IMR-90 (cell line): ENCODE measurements at regions of chr3 and their contacts with region 1.

Region 1: DNA sequence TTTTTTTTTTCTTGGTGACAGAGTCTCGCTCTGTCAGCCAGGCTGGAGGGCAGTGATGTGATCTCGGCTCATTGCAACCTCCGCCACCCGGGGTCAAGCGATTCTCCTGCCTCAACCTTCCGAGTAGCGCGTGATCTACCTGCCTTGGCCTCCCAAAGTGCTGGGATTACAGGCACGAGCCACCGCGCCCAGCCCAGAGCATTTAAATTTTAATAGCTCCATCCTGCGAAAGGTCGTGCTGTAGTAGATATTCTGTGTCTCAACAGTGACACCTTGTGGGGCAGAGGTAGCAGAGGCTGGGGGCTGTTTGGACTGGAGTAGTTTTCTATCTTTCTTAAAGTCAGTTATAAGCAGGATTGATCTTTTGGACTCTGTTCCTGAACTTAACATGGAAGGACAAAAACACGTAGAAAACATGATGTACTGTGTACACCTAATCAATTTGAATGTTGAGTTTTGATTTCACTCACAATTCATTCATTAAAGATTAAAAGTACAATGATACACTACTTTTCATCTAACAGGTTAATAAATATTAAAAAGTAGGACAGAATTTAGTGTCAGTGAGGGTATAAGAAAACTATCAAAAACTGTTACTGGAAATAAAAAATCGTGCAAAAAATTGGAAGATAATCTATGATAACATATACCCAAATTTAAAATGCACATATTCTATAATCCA is 11.0 kb upstream of the PDCD6IP start:
- DNase-seq: peak; percentile 72
- ATAC-seq: peak; percentile 97
- H3K4me3 ChIP-seq: peak overlapping the region; percentile 28
- H3K27ac ChIP-seq: no peak overlapping the region
- H3K4me1 ChIP-seq: peaks cover 2% of the 10 kb centered on the region
- H3K27me3 ChIP-seq: no peaks in the 10 kb centered on the region
- CTCF ChIP-seq: peak; percentile 84
- POLR2A ChIP-seq: no peak
- RAD21 ChIP-seq: peak; percentile 78

Region 2: DNA sequence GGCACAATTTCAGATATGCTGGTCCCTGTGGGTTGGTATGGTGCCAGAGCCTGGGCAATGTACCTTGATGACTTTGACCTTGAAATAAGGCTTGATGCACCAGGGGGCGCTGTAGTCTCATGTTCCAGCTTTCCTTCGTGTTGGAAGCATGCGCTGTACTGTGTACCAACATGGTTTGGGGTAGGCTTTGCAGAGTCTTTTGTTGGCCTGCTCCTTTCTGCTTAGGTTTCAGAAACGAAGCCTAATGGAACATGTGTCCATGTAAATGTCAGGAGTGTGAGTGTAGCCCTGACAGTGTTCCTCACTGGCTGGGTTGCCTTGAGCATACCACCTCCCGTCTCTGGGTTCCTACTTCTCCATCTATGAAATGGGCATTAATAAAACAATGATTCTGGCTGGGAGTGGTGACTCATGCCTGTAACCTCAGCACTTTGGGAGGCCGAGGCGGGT is 839.7 kb before region 1 on chr3:
- CTCF ChIA-PET with region 1: interaction called, 4 read pairs
- POLR2A ChIA-PET with region 1: no interaction called
- dilution Hi-C with region 1: no loop called
- in situ Hi-C with region 1: loop called (anchors 25 kb)
- intact Hi-C with region 1: loop called (anchors 2 kb)
- DNase-seq: peak; percentile 75
- ATAC-seq: peak; percentile 94
- H3K4me3 ChIP-seq: no peak overlapping the region
- H3K27ac ChIP-seq: no peak overlapping the region
- H3K4me1 ChIP-seq: no peaks in the 10 kb centered on the region
- H3K27me3 ChIP-seq: peaks cover 6% of the 10 kb centered on the region
- CTCF ChIP-seq: peak; percentile 78
- POLR2A ChIP-seq: no peak
- RAD21 ChIP-seq: peak; percentile 87

Region 3: DNA sequence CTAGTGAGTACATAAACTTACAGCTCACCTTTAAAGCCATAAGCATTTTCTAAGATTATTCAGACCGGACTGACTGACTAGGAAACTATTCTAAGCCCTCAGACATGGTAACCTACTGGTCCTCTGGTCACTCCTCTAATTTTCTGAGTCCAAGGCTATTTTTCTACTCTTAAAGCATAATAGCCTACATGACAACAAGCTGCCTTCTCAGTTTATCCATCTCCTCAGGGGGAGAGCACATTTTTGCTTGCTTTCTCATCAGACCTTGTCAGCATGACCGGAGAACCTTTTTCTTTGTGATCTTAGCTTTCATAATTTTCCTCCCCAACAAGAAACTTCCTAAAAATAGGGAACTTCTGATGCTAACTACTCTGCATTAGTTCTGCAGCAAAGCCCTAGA is 385.7 kb before region 1 on chr3:
- CTCF ChIA-PET with region 1: no interaction called
- POLR2A ChIA-PET with region 1: no interaction called
- dilution Hi-C with region 1: no loop called
- in situ Hi-C with region 1: no loop called
- intact Hi-C with region 1: loop called (anchors 10 kb)
- DNase-seq: peak; percentile 70
- ATAC-seq: peak; percentile 78
- H3K4me3 ChIP-seq: no peak overlapping the region
- H3K27ac ChIP-seq: no peak overlapping the region
- H3K4me1 ChIP-seq: peaks cover 6% of the 10 kb centered on the region
- H3K27me3 ChIP-seq: no peaks in the 10 kb centered on the region
- CTCF ChIP-seq: no peak
- POLR2A ChIP-seq: no peak
- RAD21 ChIP-seq: no peak

Region 4: DNA sequence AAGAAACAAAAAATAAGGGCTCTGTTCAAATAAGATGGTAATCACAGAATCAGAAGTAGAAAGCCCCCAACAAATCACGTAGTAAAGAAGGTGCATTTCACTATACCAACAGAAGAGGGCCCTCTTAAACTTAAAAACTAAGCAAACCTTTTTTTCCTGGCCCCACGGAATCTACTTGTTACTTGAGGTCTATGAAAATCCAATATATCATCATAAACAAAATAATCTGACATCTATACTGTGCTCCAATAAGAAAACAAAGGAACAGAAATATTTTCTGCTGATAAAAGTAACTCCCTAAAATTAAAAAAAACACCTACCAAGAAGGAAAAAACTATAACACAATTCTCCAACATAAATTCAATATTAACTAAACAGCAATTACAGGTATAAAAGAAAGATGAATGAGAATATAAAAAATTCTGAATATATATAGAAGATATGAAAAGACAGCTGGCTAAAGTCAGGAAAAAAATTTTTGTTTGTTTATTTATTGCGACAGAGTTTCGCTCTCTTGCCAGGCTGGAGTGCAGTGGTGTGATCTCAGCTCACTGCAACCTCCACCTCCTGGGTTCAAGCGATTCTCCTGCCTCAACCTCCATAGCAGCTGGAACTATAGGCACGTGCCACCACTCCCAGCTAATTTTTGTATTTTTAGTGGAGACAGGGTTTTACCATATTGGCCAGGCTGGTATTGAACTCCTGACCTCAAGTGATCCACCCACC is 151.2 kb before region 1 on chr3:
- CTCF ChIA-PET with region 1: interaction called, 10 read pairs
- POLR2A ChIA-PET with region 1: no interaction called
- dilution Hi-C with region 1: no loop called
- in situ Hi-C with region 1: loop called (anchors 5 kb)
- intact Hi-C with region 1: loop called (anchors 1 kb)
- DNase-seq: peak; percentile 78
- ATAC-seq: peak; percentile 75
- H3K4me3 ChIP-seq: no peak overlapping the region
- H3K27ac ChIP-seq: no peak overlapping the region
- H3K4me1 ChIP-seq: no peaks in the 10 kb centered on the region
- H3K27me3 ChIP-seq: no peaks in the 10 kb centered on the region
- CTCF ChIP-seq: peak; percentile 71
- POLR2A ChIP-seq: no peak
- RAD21 ChIP-seq: peak; percentile 73

Region 5: DNA sequence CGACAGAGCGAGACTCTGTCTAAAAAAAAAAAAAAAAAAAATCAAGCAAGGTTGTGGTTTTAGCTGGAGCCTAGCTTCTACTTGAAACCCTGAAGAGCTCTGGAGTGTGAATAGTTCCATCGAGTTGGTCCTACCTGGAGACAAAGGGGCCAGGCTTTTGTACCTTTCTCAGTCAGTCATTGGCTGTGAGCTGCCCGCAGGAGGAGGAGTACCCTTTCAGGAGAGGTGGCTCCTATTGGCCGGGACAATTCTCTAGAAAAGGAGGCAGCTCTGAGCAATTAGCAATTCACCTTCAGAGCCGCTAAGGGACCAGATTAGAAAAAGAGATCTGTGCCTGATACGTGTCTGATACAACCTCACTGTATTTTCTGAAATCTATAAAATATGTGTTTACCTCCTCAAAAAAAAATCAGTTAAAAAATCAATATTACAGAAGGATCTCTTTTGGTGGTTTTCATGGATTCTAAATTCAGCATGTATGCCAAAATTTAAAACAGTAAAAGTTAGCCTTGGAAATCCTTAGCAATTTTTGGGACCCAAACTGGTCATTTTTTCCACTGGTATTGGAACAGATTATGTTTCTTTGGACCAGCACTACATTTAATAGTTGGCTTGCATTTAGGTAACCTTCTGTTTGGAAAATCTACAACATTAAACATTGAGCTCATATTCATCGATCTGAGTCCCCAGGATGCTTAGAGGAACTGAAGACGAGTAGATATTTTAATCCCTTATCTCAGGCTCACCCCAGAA is 18.7 kb before region 1 on chr3:
- CTCF ChIA-PET with region 1: no interaction called
- POLR2A ChIA-PET with region 1: no interaction called
- dilution Hi-C with region 1: no loop called
- in situ Hi-C with region 1: no loop called
- intact Hi-C with region 1: no loop called
- DNase-seq: no peak
- ATAC-seq: no peak
- H3K4me3 ChIP-seq: no peak overlapping the region
- H3K27ac ChIP-seq: no peak overlapping the region
- H3K4me1 ChIP-seq: no peaks in the 10 kb centered on the region
- H3K27me3 ChIP-seq: no peaks in the 10 kb centered on the region
- CTCF ChIP-seq: no peak
- POLR2A ChIP-seq: no peak
- RAD21 ChIP-seq: no peak

Region 6: DNA sequence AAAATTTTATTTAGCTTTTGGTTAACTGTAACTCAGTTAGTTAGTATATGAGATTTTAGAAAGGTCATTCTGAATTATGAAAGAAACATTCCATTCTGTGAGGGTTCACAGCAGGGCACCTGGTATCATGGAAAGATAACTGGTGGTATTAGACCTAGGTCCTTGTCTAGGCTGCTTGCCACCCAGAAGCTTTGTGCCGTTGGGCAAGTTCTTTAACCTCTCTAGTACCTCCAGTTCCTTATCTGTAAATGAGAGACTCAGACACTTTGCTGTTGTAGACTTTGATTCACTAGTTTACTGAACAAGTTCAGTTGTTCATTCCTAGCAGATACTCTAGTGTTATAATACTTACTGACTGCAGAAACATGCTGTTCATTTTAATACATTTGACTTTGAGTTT is 36.4 kb after region 1 on chr3:
- CTCF ChIA-PET with region 1: no interaction called
- POLR2A ChIA-PET with region 1: no interaction called
- dilution Hi-C with region 1: no loop called
- in situ Hi-C with region 1: no loop called
- intact Hi-C with region 1: no loop called
- DNase-seq: no peak
- ATAC-seq: no peak
- H3K4me3 ChIP-seq: no peak overlapping the region
- H3K27ac ChIP-seq: no peak overlapping the region
- H3K4me1 ChIP-seq: no peaks in the 10 kb centered on the region; the same call in 1 of the 2 replicates
- H3K27me3 ChIP-seq: no peaks in the 10 kb centered on the region
- CTCF ChIP-seq: no peak
- POLR2A ChIP-seq: no peak
- RAD21 ChIP-seq: no peak